Mammary epithelial cell (primary cell): ENCODE measurements at regions of chr5 and their contacts with region 1.

Region 1: GRCh38 chr5:32261198-32261597 is 51.5 kb downstream of the MTMR12 start:
- DNase-seq: no peak
- H3K4me3 ChIP-seq: no peak overlapping the region
- H3K27ac ChIP-seq: no peak overlapping the region
- H3K4me1 ChIP-seq: no peaks in the 10 kb centered on the region
- H3K27me3 ChIP-seq: no peaks in the 10 kb centered on the region
- CTCF ChIP-seq: no peak

Region 2: DNA sequence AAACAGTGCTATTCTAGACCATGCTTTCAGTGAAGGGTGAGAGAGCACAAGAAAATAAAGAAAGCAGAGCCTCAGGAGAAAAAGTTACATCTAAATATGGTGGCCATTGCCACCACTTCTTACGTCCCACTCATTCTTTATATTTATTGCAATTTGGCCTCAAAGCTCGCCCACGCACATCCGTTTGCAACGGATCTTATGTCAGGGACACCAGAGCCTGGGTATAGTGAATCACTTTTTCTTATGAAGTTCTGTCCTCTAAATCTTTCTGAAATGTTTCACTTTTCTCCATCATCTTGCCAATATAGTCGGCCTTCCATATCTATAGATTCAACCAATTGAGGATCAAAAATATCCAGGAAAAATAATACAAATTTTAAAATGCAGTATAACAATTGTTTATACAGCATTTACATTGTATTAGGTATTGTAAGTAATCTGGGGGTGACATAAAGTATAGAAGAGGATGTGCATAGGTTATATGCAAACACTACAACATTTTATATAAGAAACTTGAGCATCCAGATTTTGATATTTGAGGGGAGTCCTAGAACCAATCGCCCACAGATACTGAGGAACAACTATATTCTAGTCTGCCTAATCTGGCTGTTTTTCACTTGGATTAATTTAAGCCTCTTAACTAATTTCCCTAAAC is 122.2 kb before region 1 on chr5:
- CTCF ChIA-PET with region 1: no interaction called
- dilution Hi-C with region 1: no loop called
- in situ Hi-C with region 1: no loop called
- intact Hi-C with region 1: no loop called
- DNase-seq: peak; percentile 17
- H3K4me3 ChIP-seq: no peak overlapping the region
- H3K27ac ChIP-seq: no peak overlapping the region
- H3K4me1 ChIP-seq: no peaks in the 10 kb centered on the region
- H3K27me3 ChIP-seq: no peaks in the 10 kb centered on the region
- CTCF ChIP-seq: no peak

Region 3: DNA sequence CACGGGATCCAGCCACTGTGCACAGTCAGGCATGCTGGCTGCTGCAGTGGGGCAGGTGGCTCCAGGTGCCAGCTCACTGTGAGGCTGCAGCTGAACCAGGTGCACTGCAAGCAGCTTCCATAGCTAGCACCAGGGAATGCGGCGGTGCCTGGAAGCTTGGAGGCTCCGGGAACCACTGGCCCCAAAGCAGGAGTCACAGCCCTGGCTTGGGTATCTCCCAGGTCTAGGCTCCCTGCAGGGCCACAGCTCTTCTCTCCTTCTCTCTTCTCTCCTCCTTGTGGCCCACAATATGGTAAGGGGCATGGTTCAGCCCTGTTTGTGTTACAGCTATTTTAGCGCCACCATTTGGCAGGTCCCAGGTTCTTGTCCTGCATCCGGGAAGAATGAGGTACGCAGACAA is 58.2 kb after region 1 on chr5:
- CTCF ChIA-PET with region 1: no interaction called
- dilution Hi-C with region 1: loop called (anchors 5 kb)
- in situ Hi-C with region 1: no loop called
- intact Hi-C with region 1: no loop called
- DNase-seq: no peak
- H3K4me3 ChIP-seq: no peak overlapping the region
- H3K27ac ChIP-seq: no peak overlapping the region
- H3K4me1 ChIP-seq: peaks cover 6% of the 10 kb centered on the region
- H3K27me3 ChIP-seq: no peaks in the 10 kb centered on the region
- CTCF ChIP-seq: no peak